ENCODE measurements at regions of chr1 and their contacts with region 1.

Region 1: DNA sequence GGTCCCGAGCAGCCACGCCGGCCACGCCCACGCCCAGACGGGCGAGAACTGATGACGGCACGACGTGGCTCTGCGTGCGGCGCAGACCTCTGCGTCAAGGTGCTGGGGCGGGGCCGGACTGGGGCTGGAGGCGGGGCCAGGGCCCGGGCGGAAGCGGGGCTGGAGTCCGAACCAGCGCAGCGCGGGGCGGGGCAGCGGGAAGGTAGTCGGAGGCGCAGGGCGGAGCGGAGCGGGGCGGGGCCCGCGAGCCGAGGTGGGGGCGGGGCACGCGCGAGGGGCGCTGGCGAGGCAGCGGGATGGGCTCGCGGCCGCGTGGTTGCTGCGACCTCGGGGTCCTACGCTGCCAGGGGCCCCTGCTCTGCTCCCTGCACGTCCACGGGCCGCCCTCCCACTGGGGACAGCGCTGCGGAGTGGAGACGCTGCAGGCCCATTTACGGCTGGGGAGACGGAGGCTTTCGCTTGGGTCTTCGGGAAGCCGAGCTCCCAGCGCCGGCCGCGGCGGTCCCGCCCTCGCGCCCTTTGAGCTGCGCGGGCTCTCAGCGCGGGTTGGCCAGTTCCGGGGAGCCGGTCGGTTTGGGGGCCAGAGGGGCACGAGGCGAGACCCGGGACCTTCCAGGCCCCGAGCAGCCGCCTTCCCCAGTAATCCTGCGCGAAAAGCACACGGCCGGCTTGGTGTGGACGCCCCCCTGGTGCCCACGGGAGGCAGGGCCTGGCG is at the start of gene PEX10:
- DNase-seq: peak; percentile 99
- H3K4me3 ChIP-seq: peak within 1 kb of the TSS; percentile 75 to 97 (median 94)
- H3K27ac ChIP-seq: peak within 1 kb of the TSS; percentile 87 to 95 (median 92)
- H3K4me1 ChIP-seq: peaks cover 27 to 37% (median 30%) of the 10 kb centered on the region in 4 donors
- H3K27me3 ChIP-seq: peaks cover 0 to 26% (median 5%) of the 10 kb centered on the region in 4 donors
- CTCF ChIP-seq: peak in 1 of 3 experiments; percentile 4
- EP300 ChIP-seq: no peak
- POLR2A ChIP-seq: no peak
- total RNA-seq, gene PEX10: 14.2 to 27.1 (median 20.3) TPM

Region 2: DNA sequence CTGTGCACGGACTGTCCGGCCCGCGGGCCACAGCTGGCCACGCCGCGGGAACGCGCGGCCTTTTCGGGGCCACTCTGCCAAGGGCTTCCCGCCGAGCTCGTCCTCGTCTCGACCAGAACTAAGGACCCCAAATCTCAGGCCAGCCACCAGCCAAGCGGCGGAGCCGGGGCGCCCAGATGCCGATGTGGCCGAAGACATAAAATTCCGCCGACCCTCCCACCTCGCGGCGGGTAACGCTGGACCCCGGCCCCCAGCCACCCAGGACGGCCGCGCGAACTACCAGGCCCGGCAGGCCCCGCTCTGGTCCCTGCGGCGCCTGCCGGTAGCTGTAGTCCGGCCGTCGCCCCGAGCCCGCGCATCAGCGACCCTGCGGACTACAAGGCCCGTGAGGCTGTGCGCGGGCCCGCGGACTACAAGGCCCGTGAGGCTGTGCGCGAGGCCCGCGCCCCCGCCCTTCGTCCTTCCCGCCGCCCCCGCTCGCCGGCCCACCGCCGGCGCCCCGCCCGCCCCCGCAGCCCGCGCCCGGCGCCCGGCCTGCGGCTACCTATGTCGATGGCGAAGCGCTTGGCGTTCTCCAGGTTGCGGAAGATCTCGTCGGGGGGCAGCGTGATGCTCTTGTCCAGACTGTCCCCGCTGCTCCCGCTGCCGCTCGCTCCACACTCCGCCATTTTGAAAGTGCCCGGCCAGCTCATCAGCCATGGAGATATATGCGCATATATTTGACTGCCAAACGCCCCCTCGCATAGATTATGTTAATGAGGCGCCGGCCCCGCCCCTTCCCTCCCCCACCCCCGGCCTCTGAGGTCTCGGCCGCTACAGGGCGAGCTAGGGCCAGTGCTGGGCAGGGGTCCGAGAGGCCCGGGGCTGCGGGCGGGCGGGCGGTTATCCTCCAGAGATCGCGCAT is 113.5 kb after region 1 on chr1 and contains the start of gene PANK4:
- intact Hi-C with region 1: loop called (anchors 5 kb)
- DNase-seq: peak; percentile 99
- H3K4me3 ChIP-seq: peak within 1 kb of the TSS; percentile 77 to 94 (median 88)
- H3K27ac ChIP-seq: peak within 1 kb of the TSS; percentile 75 to 85 (median 81)
- H3K4me1 ChIP-seq: peaks cover 59 to 81% (median 76%) of the 10 kb centered on the region in 4 donors
- H3K27me3 ChIP-seq: peaks cover 7 to 38% (median 21%) of the 10 kb centered on the region in 4 donors
- CTCF ChIP-seq: peak in 1 of 3 experiments; percentile 17
- EP300 ChIP-seq: no peak
- POLR2A ChIP-seq: no peak
- total RNA-seq, gene PANK4: 22.5 to 48.9 (median 37.9) TPM

Region 3: DNA sequence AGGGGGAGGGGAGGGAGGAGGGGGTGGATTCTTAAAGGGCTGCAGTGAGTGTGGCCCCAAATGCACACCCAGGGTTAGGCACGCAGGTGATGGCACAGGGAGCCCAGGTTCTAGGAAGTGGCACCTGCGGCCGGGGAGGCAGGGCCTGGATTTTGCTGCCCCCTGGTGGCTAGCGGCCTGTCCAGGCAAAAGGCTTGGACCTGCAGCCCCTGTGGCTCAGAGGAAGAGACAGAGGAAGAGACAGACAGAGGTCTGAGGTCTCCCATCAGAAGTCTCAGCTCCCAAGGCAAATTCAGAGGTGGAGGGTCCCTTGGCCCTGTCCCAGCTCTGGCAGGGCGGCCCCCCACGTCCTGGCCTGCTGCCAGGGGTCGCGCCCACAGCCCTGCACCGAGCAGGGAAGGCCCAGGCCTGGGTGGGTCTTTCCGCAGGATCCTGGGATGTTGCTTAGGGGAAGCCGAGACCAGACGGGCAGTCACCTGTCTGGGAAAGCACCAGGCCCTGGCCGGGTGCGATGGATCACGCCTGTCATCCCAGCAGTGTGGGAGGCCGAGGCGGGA is 135.4 kb after region 1 on chr1:
- intact Hi-C with region 1: loop called (anchors 1 kb)
- DNase-seq: no peak
- H3K4me3 ChIP-seq: peak overlapping the region; percentile 55 to 75 (median 60)
- H3K27ac ChIP-seq: peak overlapping the region; percentile 84 to 90 (median 89)
- H3K4me1 ChIP-seq: peaks cover 53 to 70% (median 64%) of the 10 kb centered on the region in 4 donors
- H3K27me3 ChIP-seq: peaks cover 5 to 51% (median 16%) of the 10 kb centered on the region in 4 donors
- CTCF ChIP-seq: peak in 2 of 3 experiments; percentile 91 to 94
- EP300 ChIP-seq: no peak
- POLR2A ChIP-seq: no peak

Region 4: DNA sequence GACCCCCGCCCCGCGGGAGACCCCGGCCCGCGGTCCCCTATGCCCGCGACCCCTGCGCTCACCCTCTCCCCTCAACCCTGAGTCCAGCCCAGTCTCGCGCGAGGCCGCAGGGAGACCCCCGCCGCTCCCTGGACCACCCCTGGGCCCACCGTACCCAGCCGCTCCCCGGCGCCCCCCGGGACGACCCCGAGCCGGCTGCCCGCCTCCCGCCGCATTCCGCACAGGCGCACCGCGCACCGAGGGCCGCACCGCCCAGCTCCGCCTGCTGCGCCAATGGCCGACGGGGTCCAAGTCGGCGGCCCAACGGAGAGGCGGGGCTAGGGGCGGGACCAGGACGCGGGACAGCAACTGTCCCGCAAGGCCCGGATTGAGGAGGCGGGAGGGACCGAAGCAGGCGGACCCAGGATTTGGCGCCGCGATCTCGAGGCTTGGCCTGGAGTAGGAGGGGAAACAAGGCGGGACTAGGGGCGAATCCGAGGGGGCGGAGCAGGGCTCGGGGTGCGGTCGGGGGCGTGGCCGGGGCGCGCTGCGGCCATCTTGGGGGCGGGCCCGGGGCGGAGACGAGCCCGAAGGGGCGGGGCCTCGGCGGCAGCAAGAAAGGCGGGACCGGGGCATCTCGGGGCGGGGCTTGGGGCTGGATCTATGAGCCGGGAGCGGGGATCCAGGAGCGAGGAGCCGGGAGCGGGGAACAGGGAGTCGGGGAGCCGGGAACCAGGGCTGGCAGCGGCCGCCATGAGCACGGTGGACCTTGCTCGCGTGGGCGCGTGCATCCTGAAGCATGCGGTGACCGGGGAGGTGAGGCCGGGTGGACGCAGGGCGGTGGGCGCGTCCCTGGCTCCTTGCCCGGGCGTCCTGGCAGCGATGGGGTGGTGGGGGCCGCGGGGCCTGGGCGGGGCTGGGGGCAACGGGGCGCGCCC is 173.7 kb after region 1 on chr1 and contains the start of gene PRXL2B:
- intact Hi-C with region 1: loop called (anchors 2 kb)
- DNase-seq: peak; percentile 100
- H3K4me3 ChIP-seq: peak within 1 kb of the TSS; percentile 82 to 95 (median 88)
- H3K27ac ChIP-seq: peak within 1 kb of the TSS; percentile 92 to 99 (median 98)
- H3K4me1 ChIP-seq: peaks cover 22 to 49% (median 40%) of the 10 kb centered on the region in 4 donors
- H3K27me3 ChIP-seq: no peaks in the 10 kb centered on the region
- CTCF ChIP-seq: no peak
- EP300 ChIP-seq: no peak
- POLR2A ChIP-seq: peak; percentile 81
- total RNA-seq, gene PRXL2B: 7.9 to 18.8 (median 14.8) TPM

Region 5: GRCh38 chr1:2642560-2643413 is 230.1 kb after region 1 on chr1:
- intact Hi-C with region 1: loop called (anchors 5 kb)
- DNase-seq: peak; percentile 97
- H3K4me3 ChIP-seq: peak overlapping the region; percentile 64 to 99 (median 86)
- H3K27ac ChIP-seq: peak overlapping the region; percentile 78 to 91 (median 84)
- H3K4me1 ChIP-seq: peaks cover 17 to 44% (median 25%) of the 10 kb centered on the region in 4 donors
- H3K27me3 ChIP-seq: peaks cover 0 to 3% (median 0%) of the 10 kb centered on the region in 4 donors
- CTCF ChIP-seq: peak in 2 of 3 experiments; percentile 21 to 30
- EP300 ChIP-seq: no peak
- POLR2A ChIP-seq: no peak

Region 6: GRCh38 chr1:2786329-2787162 is 373.9 kb after region 1 on chr1:
- intact Hi-C with region 1: loop called (anchors 5 kb)
- DNase-seq: no peak
- H3K4me3 ChIP-seq: no peak overlapping the region
- H3K27ac ChIP-seq: no peak overlapping the region
- H3K4me1 ChIP-seq: peaks cover 0 to 11% (median 4%) of the 10 kb centered on the region in 4 donors
- H3K27me3 ChIP-seq: peaks cover 0 to 87% (median 23%) of the 10 kb centered on the region in 4 donors
- CTCF ChIP-seq: peak; percentile 31 to 69 (median 54)
- EP300 ChIP-seq: no peak
- POLR2A ChIP-seq: no peak

Region 7: GRCh38 chr1:3423245-3423829 is 1010.7 kb after region 1 on chr1:
- intact Hi-C with region 1: loop called (anchors 5 kb)
- DNase-seq: no peak
- H3K4me3 ChIP-seq: no peak overlapping the region
- H3K27ac ChIP-seq: peak overlapping the region in 3 of 4 donors; percentile 28 to 45 (median 31)
- H3K4me1 ChIP-seq: peaks cover 13 to 33% (median 27%) of the 10 kb centered on the region in 4 donors
- H3K27me3 ChIP-seq: peaks cover 0 to 61% (median under 1%) of the 10 kb centered on the region in 4 donors
- CTCF ChIP-seq: no peak
- EP300 ChIP-seq: no peak
- POLR2A ChIP-seq: no peak

Measured in esophagus muscularis mucosa (tissue), 4 donors.